HepG2 (cell line): ENCODE measurements at regions of chr13 and their contacts with region 1.

Region 1: DNA sequence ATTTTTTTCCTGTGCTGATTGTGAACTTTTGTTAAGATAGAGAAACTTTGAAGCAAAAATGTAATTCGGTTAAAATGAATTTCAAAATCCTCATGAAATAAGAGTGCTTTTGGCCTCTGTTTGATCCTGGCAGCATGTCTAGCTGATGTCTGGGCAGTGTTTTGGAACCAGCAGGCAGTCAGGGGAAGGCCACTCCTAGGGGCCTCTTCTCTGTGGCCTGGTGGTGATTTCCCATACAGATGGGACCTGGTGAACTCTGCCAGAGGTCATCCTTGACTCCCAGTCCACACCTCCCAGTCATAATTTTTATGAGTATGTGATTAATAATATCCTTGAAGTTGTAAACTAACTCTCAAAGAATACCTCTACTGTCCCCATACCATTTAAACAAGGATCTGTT is 226.6 kb downstream of the PCCA start:
- DNase-seq: peak; percentile 21
- ATAC-seq: peak; percentile 57; the same call in 2 of the 3 replicates
- H3K4me3 ChIP-seq: no peak overlapping the region
- H3K27ac ChIP-seq: no peak overlapping the region
- H3K4me1 ChIP-seq: peaks cover 23% of the 10 kb centered on the region
- H3K27me3 ChIP-seq: no peaks in the 10 kb centered on the region
- CTCF ChIP-seq: no peak
- EP300 ChIP-seq: no peak
- POLR2A ChIP-seq: no peak
- RAD21 ChIP-seq: no peak

Region 2: GRCh38 chr13:99821741-99822140 is 493.8 kb before region 1 on chr13:
- CTCF ChIA-PET with region 1: no interaction called
- POLR2A ChIA-PET with region 1: no interaction called
- in situ Hi-C with region 1: no loop called
- intact Hi-C with region 1: no loop called
- DNase-seq: no peak
- ATAC-seq: no peak
- H3K4me3 ChIP-seq: no peak overlapping the region
- H3K27ac ChIP-seq: no peak overlapping the region
- H3K4me1 ChIP-seq: peaks cover 20% of the 10 kb centered on the region
- H3K27me3 ChIP-seq: no peaks in the 10 kb centered on the region; a peak in 1 of 5 replicates
- CTCF ChIP-seq: no peak
- EP300 ChIP-seq: no peak
- POLR2A ChIP-seq: no peak
- RAD21 ChIP-seq: no peak

Region 3: GRCh38 chr13:100336795-100337516 is 21.4 kb after region 1 on chr13:
- CTCF ChIA-PET with region 1: no interaction called
- POLR2A ChIA-PET with region 1: no interaction called
- in situ Hi-C with region 1: no loop called
- intact Hi-C with region 1: loop called (anchors 1 kb)
- DNase-seq: peak; percentile 80
- ATAC-seq: peak; percentile 99
- H3K4me3 ChIP-seq: no peak overlapping the region
- H3K27ac ChIP-seq: no peak overlapping the region
- H3K4me1 ChIP-seq: peaks cover 19% of the 10 kb centered on the region
- H3K27me3 ChIP-seq: no peaks in the 10 kb centered on the region
- CTCF ChIP-seq: 0 out of 2 replicates have a peak, but pooled peaks have one; percentile 31
- EP300 ChIP-seq: 0 out of 4 replicates have a peak, but pooled peaks of 1 of the 2 experiments have one; percentile 24
- POLR2A ChIP-seq: no peak
- RAD21 ChIP-seq: no peak

Region 4: DNA sequence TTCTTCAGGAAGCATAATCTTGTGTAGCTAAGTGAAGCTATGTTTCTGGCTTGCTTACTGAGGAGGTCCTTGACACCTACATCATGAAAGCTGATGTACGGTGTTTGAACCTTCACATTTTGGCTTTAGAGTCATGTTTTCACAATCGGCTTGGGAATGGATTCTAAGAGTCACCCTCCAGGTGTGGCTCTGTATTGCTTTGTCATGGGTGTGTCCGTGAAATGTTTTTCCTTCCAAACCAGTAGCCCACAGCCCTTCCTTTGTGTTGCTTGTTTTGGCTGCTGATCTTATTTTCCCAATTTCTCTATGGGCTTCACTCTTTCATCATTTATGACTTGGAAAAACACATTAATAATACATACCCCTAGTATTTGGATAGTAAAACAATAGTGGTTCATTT is 32.4 kb after region 1 on chr13:
- CTCF ChIA-PET with region 1: no interaction called
- POLR2A ChIA-PET with region 1: no interaction called
- in situ Hi-C with region 1: no loop called
- intact Hi-C with region 1: no loop called
- DNase-seq: no peak
- ATAC-seq: no peak
- H3K4me3 ChIP-seq: no peak overlapping the region
- H3K27ac ChIP-seq: no peak overlapping the region
- H3K4me1 ChIP-seq: 0 out of 2 replicates have a peak, but pooled peaks cover 5% of the 10 kb centered on the region
- H3K27me3 ChIP-seq: no peaks in the 10 kb centered on the region
- CTCF ChIP-seq: no peak
- EP300 ChIP-seq: no peak
- POLR2A ChIP-seq: no peak
- RAD21 ChIP-seq: no peak

Region 5: GRCh38 chr13:100392709-100393641 is 77.5 kb after region 1 on chr13:
- CTCF ChIA-PET with region 1: no interaction called
- POLR2A ChIA-PET with region 1: no interaction called
- in situ Hi-C with region 1: no loop called
- intact Hi-C with region 1: loop called (anchors 2 kb)
- DNase-seq: peak; percentile 91
- ATAC-seq: peak; percentile 95
- H3K4me3 ChIP-seq: no peak overlapping the region
- H3K27ac ChIP-seq: peak overlapping the region; percentile 36
- H3K4me1 ChIP-seq: peaks cover 17% of the 10 kb centered on the region
- H3K27me3 ChIP-seq: no peaks in the 10 kb centered on the region
- CTCF ChIP-seq: no peak
- EP300 ChIP-seq: peak; percentile 42 to 74; a peak in 2 of 4 replicates
- POLR2A ChIP-seq: no peak
- RAD21 ChIP-seq: no peak